Activated naive CD4-positive, alpha-beta T cell treated with anti-CD3 and anti-CD28 coated beads for 36 hours (primary cell): ENCODE measurements at regions of chr15 and their contacts with region 1.

Region 1: DNA sequence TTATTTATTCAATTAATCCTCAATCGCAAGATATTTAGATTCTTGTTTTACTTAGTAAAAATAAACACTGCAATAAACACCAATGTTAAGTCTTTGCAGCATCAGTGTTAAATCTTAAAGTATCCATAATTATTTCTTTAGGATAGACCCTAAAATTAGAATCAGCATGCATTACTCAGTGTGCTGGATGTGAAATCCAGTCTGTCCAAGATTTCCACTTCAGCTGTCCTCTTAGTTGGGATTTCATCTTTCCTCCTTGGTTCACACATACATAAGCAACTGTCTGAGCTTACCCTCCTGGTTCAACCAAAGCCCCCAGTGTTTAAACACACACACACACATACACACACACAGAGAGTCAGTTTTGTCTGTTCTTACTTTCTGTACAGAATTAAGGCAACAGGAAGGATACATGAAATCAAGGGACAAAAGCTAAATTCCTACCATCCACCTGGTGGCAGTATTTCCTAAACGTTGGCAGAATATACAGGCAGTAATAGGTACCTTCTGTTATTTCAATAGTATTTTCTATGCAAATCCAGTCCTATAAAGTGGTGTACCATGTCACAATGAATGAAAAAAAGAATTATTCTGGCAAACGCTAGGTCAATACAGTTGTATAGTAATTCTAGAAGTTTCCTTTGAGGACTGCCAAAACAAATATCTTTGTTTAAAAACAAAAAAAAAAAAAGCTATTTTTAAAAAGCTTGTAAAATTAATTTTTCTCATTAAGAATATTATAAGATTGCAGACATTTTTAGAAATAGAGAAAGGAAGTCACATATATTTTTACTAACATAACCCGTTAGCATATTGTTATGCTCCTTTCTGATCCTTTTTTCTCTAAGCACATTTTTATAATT is 27.3 kb upstream of the DMXL2 start:
- DNase-seq: peak; percentile 60
- H3K4me3 Mint-ChIP-seq: no peak overlapping the region
- H3K27ac Mint-ChIP-seq: no peak overlapping the region
- H3K4me1 Mint-ChIP-seq: no peaks in the 10 kb centered on the region
- H3K27me3 Mint-ChIP-seq: no peaks in the 10 kb centered on the region

Region 2: GRCh38 chr15:51634591-51635198 is 15.2 kb before region 1 on chr15:
- CTCF ChIA-PET with region 1: no interaction called
- intact Hi-C with region 1: no loop called
- DNase-seq: no peak
- H3K4me3 Mint-ChIP-seq: no peak overlapping the region
- H3K27ac Mint-ChIP-seq: no peak overlapping the region
- H3K4me1 Mint-ChIP-seq: no peaks in the 10 kb centered on the region
- H3K27me3 Mint-ChIP-seq: no peaks in the 10 kb centered on the region

Region 3: DNA sequence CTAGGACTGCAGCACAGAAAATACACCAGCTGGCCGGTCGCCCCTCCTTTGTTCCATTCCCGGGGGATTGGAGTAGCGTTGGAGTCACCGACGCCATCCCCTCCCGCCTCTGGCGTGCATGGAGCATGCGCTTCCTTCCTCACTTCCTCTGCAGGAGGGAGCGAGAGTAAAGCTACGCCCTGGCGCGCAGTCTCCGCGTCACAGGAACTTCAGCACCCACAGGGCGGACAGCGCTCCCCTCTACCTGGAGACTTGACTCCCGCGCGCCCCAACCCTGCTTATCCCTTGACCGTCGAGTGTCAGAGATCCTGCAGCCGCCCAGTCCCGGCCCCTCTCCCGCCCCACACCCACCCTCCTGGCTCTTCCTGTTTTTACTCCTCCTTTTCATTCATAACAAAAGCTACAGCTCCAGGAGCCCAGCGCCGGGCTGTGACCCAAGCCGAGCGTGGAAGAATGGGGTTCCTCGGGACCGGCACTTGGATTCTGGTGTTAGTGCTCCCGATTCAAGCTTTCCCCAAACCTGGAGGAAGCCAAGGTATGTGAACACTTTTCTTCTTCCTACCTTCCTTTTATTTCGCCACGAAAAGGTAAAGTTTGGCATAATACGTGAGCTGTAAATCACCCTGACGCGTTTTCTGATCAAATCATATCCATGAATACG is 31.5 kb after region 1 on chr15 and contains the start of gene SCG3:
- CTCF ChIA-PET with region 1: interaction called, 11 read pairs
- intact Hi-C with region 1: no loop called
- DNase-seq: peak; percentile 86
- H3K4me3 Mint-ChIP-seq: peak within 1 kb of the TSS; percentile 22
- H3K27ac Mint-ChIP-seq: no peak within 1 kb of the TSS
- H3K4me1 Mint-ChIP-seq: peaks cover 5% of the 10 kb centered on the region
- H3K27me3 Mint-ChIP-seq: peaks cover 36% of the 10 kb centered on the region
- total RNA-seq, gene SCG3: not detected

Region 4: DNA sequence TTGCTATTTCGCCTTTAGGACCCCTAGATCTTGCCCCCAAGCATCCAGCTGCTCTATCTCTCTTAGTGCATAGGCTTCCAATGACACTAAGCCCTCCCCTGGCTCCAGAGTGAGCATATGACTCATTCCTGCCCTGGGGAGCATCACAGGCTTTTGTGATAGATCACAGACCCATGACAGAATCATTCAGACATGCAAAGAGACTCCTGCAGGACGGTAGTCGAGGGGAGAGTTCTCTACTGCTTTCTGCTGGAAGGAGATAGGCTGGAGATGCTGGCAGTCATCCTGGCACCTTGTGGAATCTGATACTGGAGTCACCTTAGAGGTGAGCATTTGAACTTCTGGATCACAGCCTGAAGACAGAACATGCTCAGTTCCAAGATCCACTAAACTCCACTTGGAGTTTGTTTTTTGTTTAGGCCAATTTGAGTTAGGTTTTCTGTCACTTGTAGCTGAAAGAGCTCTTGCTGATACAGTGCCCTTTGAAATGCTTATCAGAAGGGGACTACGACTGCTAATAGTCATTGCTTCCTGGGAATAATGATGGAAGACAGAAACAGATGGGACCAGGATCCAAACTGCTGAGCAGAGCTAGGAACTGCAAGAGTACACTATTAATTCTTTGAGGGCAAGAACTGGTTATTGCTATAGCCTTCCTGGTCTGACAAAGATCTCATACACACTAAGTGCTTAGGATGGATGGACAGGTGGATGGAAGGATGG is 76.6 kb after region 1 on chr15:
- CTCF ChIA-PET with region 1: interaction called, 19 read pairs
- intact Hi-C with region 1: loop called (anchors 2 kb)
- DNase-seq: peak; percentile 74
- H3K4me3 Mint-ChIP-seq: no peak overlapping the region
- H3K27ac Mint-ChIP-seq: no peak overlapping the region
- H3K4me1 Mint-ChIP-seq: peaks cover 57% of the 10 kb centered on the region
- H3K27me3 Mint-ChIP-seq: no peaks in the 10 kb centered on the region

Region 5: GRCh38 chr15:51731549-51732267 is 81.8 kb after region 1 on chr15:
- CTCF ChIA-PET with region 1: interaction called, 19 read pairs
- intact Hi-C with region 1: loop called (anchors 1 kb)
- DNase-seq: peak; percentile 57
- H3K4me3 Mint-ChIP-seq: peak overlapping the region; percentile 60
- H3K27ac Mint-ChIP-seq: peak overlapping the region; percentile 82
- H3K4me1 Mint-ChIP-seq: peaks cover 75% of the 10 kb centered on the region
- H3K27me3 Mint-ChIP-seq: no peaks in the 10 kb centered on the region

Region 6: DNA sequence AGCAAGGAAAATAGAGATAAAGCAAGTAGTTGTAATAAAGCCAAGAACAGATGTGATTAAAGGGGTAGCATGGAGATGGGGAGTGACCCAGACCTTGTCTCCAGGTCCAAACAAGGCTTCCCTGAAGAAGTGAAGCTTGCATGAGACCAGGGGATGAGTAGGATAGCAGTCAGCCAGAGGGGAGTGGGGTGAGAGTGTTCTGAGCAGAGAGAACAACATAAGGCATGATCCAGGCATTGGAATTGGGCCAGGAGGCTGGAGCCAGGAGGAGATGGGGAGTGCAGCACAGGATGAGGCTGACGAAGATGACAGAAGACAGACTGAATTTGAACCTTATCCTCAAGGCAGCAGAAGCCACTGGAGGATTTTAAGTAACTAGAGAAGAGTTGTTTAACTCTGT is 108.8 kb after region 1 on chr15:
- CTCF ChIA-PET with region 1: interaction called, 10 read pairs
- intact Hi-C with region 1: no loop called
- DNase-seq: no peak
- H3K4me3 Mint-ChIP-seq: no peak overlapping the region
- H3K27ac Mint-ChIP-seq: no peak overlapping the region
- H3K4me1 Mint-ChIP-seq: peaks cover 14% of the 10 kb centered on the region
- H3K27me3 Mint-ChIP-seq: no peaks in the 10 kb centered on the region

Region 7: GRCh38 chr15:51782357-51782896 is 132.5 kb after region 1 on chr15:
- CTCF ChIA-PET with region 1: interaction called, 201 read pairs
- intact Hi-C with region 1: no loop called
- DNase-seq: no peak
- H3K4me3 Mint-ChIP-seq: no peak overlapping the region
- H3K27ac Mint-ChIP-seq: no peak overlapping the region
- H3K4me1 Mint-ChIP-seq: no peaks in the 10 kb centered on the region
- H3K27me3 Mint-ChIP-seq: no peaks in the 10 kb centered on the region

Region 8: GRCh38 chr15:51907136-51907914 is 257.4 kb after region 1 on chr15:
- CTCF ChIA-PET with region 1: no interaction called
- intact Hi-C with region 1: loop called (anchors 5 kb)
- DNase-seq: no peak
- H3K4me3 Mint-ChIP-seq: no peak overlapping the region
- H3K27ac Mint-ChIP-seq: no peak overlapping the region
- H3K4me1 Mint-ChIP-seq: no peaks in the 10 kb centered on the region
- H3K27me3 Mint-ChIP-seq: no peaks in the 10 kb centered on the region